ENCODE measurements at regions of chr19 and their contacts with region 1.

Region 1: DNA sequence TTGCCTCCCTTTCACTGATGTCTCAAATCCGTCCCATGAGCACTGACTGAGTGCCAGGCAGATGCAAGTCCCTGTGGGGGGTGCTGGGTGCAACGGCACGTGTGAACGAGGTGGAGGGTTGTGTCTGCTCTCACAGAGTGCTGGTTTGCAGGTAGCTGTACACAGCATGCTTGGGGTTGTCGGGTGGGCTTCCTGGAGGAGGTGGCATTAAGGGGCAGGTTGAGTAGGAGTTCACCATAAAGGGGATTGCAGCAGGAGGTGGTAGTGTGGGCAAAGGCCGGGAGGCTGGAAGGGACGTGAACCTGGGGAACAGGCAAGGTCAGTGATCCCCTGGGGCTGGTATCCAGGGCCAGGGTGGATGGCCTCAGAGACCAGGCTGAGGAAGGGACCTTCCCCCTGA is 17.2 kb downstream of the COLGALT1 start:
- DNase-seq: no peak
- H3K4me3 ChIP-seq: no peak overlapping the region
- H3K27ac ChIP-seq: no peak overlapping the region
- H3K4me1 ChIP-seq: peaks cover 0 to 2% (median 2%) of the 10 kb centered on the region in 4 experiments; a peak in 6 of 7 replicates
- H3K27me3 ChIP-seq: no peaks in the 10 kb centered on the region
- CTCF ChIP-seq: no peak
- EP300 ChIP-seq: no peak
- POLR2A ChIP-seq: no peak
- RAD21 ChIP-seq: no peak

Region 2: GRCh38 chr19:17539238-17540117 is 33.2 kb before region 1 on chr19:
- CTCF ChIA-PET with region 1: interaction called, 20 read pairs
- POLR2A ChIA-PET with region 1: no interaction called
- DNase-seq: peak; percentile 99 to 100
- H3K4me3 ChIP-seq: peak overlapping the region; percentile 39 to 76 (median 58)
- H3K27ac ChIP-seq: no peak overlapping the region
- H3K4me1 ChIP-seq: no peaks in the 10 kb centered on the region; a peak in 2 of 7 replicates
- H3K27me3 ChIP-seq: peaks cover 0 to 6% (median 3%) of the 10 kb centered on the region in 4 experiments; a peak in 3 of 7 replicates
- CTCF ChIP-seq: peak; percentile 9 to 20 (median 11); a peak in 3 of 4 replicates
- EP300 ChIP-seq: no peak
- POLR2A ChIP-seq: peak in 1 of 2 experiments; percentile 70; a peak in 1 of 3 replicates
- RAD21 ChIP-seq: peak; percentile 42 to 47

Region 3: DNA sequence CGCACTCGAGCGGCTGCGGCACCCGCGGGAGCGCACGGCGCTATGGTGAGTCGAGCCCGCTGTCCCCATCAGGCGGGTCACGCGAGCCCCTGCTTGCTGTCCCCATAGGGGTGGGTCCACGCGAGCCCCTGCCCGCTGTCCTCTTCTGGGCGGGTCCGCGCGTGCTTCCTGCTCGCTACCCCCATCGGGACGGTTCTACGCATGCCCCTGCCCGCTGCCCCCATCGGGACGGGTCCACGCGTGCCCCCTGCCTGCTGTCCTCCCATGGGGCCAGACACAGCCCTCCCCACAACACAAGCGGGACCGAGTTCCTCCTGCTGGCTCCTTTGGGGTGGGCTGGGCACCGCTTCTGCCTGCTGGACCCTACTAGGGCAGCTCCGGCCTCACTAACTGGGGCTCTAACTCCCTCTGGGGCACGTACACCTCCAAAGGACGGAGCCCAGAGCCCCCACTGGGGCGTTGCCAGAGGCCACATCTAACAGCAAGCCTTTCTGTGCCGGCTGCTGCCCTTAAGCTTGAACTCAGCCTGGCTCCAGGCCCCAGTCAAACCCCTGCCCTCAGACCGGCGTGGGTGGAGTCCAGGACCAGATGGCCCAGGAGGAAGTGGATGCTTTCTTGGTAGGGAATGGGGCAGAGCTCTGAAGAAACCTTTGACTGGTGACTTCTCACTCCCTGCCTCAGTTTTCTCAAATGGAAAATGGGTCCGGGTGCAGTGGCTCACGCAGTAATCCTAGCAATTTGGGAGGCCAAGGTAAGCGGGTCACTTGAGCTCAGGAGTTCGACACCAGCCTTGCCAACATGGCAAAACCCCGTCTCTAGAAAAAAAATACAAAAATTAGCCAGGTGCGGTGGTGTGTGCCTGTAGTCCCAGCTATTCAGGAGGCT is 16.5 kb before region 1 on chr19:
- CTCF ChIA-PET with region 1: interaction called, 28 read pairs
- POLR2A ChIA-PET with region 1: no interaction called
- DNase-seq: peak in 1 of 2 experiments; percentile 67
- H3K4me3 ChIP-seq: peak overlapping the region; percentile 65 to 84 (median 66)
- H3K27ac ChIP-seq: no peak overlapping the region
- H3K4me1 ChIP-seq: peaks cover 0 to 7% (median 3%) of the 10 kb centered on the region in 4 experiments; a peak in 5 of 7 replicates
- H3K27me3 ChIP-seq: peaks cover 0 to 7% (median 2%) of the 10 kb centered on the region in 4 experiments; a peak in 2 of 7 replicates
- CTCF ChIP-seq: 0 out of 4 replicates have a peak, but pooled peaks of 1 of the 3 experiments have one; percentile 4
- EP300 ChIP-seq: no peak
- POLR2A ChIP-seq: no peak
- RAD21 ChIP-seq: peak in 1 of 2 experiments; percentile 27; a peak in 1 of 4 replicates

Region 4: GRCh38 chr19:17562561-17562960 is 10.1 kb before region 1 on chr19:
- CTCF ChIA-PET with region 1: interaction called, 28 read pairs
- POLR2A ChIA-PET with region 1: interaction called, 6 read pairs
- DNase-seq: no peak
- H3K4me3 ChIP-seq: no peak overlapping the region
- H3K27ac ChIP-seq: no peak overlapping the region; the same call in 1 of the 2 replicates
- H3K4me1 ChIP-seq: no peaks in the 10 kb centered on the region
- H3K27me3 ChIP-seq: no peaks in the 10 kb centered on the region
- CTCF ChIP-seq: no peak
- EP300 ChIP-seq: no peak
- POLR2A ChIP-seq: no peak
- RAD21 ChIP-seq: no peak